Aorta (tissue), 5 donors: ENCODE measurements at regions of chr6 and their contacts with region 1.

Region 1: DNA sequence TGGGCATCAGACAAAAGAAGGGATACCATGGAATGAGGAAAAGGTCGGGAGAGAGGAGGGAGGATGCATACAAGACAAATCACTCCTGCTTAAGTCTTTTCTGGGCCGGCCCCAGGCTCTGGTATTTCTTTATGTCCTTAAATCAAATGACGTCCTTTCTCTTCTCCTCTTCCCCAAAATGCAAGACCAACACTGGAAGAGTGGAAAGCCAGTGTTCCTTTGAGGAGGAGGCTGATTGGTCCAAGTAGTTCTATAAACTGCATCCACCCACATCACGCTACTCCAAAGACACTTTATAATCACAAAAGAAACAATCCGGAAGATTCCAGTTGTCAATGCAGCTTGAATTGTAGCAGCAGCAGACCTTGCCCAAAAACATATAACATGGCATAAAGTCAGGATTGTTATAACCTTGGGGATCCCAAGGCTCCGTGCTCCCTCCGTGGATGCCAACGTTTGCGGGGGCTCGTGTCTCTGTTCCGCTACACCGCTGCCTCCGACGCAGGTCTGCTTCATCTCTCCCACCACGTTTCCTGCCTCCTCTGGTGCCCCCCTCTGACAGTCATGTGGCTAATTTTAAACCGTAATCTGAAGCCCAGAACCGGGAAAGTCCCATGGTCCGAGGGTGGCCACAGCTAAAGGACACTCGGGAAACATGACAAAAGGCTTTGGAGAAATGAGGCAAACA is 47.1 kb downstream of the MCUR1 start:
- DNase-seq: peak; percentile 70 to 80
- ATAC-seq: peak; percentile 85
- H3K4me3 ChIP-seq: peak overlapping the region in 1 of 2 donors; percentile 42
- H3K27ac ChIP-seq: no peak overlapping the region
- H3K4me1 ChIP-seq: peaks cover 0 to 1% of the 10 kb centered on the region in 2 donors
- H3K27me3 ChIP-seq: no peaks in the 10 kb centered on the region

Region 2: GRCh38 chr6:13614926-13615798 is 152.1 kb before region 1 on chr6 and contains the start of gene NOL7:
- intact Hi-C with region 1: loop called (anchors 5 to 10 kb)
- DNase-seq: peak; percentile 98 to 99
- ATAC-seq: peak; percentile 99
- H3K4me3 ChIP-seq: peak within 1 kb of the TSS; percentile 55 to 74
- H3K27ac ChIP-seq: peak within 1 kb of the TSS; percentile 78 to 80
- H3K4me1 ChIP-seq: peaks cover 0 to 3% of the 10 kb centered on the region in 2 donors
- H3K27me3 ChIP-seq: no peaks in the 10 kb centered on the region
- total RNA-seq, gene NOL7: 47.4 to 54.0 TPM